Natural killer cell (primary cell): ENCODE measurements at regions of chrX and their contacts with region 1.

Region 1: DNA sequence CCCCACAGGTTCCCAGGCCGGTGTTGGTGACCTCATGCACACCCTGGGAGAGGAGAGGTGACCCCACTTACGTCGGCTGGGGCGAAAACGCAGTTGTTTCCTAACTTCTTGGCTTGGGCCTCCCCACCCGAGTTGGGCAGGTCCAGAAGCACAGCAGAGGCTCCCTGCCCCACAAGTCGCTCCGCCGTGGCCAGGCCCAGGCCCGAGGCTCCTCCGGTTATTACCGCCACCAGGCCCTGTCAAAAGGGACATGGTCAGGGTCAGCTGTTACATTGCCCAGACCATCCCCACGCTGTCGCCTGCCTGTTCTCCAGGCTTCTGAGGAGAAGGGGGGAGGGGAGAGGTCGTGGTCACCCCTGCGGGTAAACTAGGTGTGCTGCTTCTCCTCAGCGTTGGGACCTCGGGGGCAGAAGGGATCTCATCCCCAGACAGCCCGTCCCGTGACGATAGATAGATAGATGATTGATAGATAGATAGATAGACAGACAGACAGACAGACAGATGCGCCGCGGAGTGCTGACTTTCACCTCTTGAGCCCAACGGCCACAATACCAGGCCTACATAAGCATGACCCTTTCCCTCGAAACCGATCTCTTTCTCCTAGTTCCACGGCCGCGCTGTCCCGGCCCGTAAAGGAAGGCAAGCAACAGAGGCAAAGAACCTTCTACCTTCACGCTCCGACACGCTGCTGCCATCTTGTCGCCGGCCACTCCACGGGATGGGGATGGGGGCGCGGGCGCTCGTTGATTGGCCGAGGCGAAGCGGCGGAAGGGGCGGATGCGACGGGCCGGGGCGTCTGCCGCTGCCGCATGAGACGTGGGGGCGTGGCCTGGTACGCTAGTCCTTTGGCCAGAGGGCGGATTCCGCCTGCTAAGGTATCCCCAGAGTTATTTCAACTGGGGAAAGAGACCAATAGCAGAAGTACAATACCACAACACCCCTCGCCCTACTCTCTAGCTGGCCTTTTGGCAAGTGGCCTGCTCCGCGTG is at the start of gene HSD17B10:
- DNase-seq: peak; percentile 79 to 90
- ATAC-seq: peak; percentile 97 to 98 (median 98)
- H3K4me3 ChIP-seq: peak within 1 kb of the TSS; percentile 68
- H3K4me3 Mint-ChIP-seq: peak within 1 kb of the TSS; percentile 93
- H3K27ac ChIP-seq: peak within 1 kb of the TSS; percentile 74
- H3K27ac Mint-ChIP-seq: peak within 1 kb of the TSS; percentile 86 to 94
- H3K4me1 ChIP-seq: peaks cover 12% of the 10 kb centered on the region
- H3K4me1 Mint-ChIP-seq: peaks cover 11 to 15% of the 10 kb centered on the region in 2 donors
- H3K27me3 ChIP-seq: no peaks in the 10 kb centered on the region
- H3K27me3 Mint-ChIP-seq: peaks cover 5 to 8% of the 10 kb centered on the region in 2 donors
- CTCF ChIP-seq: no peak
- total RNA-seq, gene HSD17B10: 49.2 to 56.4 (median 54.3) TPM

Region 2: GRCh38 chrX:53171356-53171755 is 262.6 kb before region 1 on chrX:
- intact Hi-C with region 1: no loop called
- DNase-seq: no peak
- ATAC-seq: no peak
- H3K4me3 ChIP-seq: no peak overlapping the region
- H3K4me3 Mint-ChIP-seq: no peak overlapping the region
- H3K27ac ChIP-seq: no peak overlapping the region
- H3K27ac Mint-ChIP-seq: no peak overlapping the region
- H3K4me1 ChIP-seq: no peaks in the 10 kb centered on the region
- H3K4me1 Mint-ChIP-seq: no peaks in the 10 kb centered on the region
- H3K27me3 ChIP-seq: no peaks in the 10 kb centered on the region
- H3K27me3 Mint-ChIP-seq: no peaks in the 10 kb centered on the region
- CTCF ChIP-seq: no peak

Region 3: DNA sequence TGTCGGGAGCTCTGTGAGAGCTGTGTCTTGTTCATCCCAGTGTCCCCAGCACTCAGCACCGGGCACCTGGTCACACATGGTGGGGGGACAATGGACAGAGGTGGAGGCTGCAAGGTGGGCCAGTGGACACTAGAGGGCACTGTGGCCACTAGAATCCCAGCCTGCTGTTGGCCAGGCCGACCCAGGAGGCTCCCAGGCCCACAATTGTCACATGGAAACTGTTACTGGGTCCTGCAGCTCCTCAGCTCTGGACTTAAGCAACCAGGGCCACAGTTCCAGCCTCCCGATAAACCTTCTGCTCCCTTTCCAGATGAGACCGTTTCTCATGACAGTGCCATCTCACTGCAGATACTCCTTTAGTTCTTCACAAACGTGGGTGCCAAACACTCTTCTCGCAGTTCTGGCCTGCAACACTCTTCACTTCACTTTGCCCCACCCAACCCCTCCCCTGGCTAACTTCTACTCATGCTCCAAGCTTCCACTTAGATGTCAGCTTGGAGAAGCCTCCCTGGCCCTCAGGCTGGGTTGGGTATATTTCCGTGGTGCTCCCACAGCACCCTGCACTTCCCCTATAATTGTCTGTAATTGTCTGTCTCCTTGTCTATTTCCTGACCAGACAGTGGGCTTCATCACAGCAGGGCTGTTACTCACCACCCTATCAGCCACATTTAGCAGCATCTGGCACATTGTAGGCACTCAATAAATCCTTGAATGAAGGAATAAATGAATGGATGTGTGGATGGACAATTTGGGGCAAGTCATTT is 149.1 kb before region 1 on chrX:
- intact Hi-C with region 1: no loop called
- DNase-seq: peak; percentile 41 to 72
- ATAC-seq: peak; percentile 60 to 77 (median 77)
- H3K4me3 ChIP-seq: no peak overlapping the region
- H3K4me3 Mint-ChIP-seq: peak overlapping the region; percentile 53
- H3K27ac ChIP-seq: no peak overlapping the region
- H3K27ac Mint-ChIP-seq: peak overlapping the region; percentile 61 to 79
- H3K4me1 ChIP-seq: peaks cover 56% of the 10 kb centered on the region
- H3K4me1 Mint-ChIP-seq: peaks cover 49 to 51% of the 10 kb centered on the region in 2 donors
- H3K27me3 ChIP-seq: no peaks in the 10 kb centered on the region
- H3K27me3 Mint-ChIP-seq: peaks cover 3 to 7% of the 10 kb centered on the region in 2 donors
- CTCF ChIP-seq: peak; percentile 64

Region 4: DNA sequence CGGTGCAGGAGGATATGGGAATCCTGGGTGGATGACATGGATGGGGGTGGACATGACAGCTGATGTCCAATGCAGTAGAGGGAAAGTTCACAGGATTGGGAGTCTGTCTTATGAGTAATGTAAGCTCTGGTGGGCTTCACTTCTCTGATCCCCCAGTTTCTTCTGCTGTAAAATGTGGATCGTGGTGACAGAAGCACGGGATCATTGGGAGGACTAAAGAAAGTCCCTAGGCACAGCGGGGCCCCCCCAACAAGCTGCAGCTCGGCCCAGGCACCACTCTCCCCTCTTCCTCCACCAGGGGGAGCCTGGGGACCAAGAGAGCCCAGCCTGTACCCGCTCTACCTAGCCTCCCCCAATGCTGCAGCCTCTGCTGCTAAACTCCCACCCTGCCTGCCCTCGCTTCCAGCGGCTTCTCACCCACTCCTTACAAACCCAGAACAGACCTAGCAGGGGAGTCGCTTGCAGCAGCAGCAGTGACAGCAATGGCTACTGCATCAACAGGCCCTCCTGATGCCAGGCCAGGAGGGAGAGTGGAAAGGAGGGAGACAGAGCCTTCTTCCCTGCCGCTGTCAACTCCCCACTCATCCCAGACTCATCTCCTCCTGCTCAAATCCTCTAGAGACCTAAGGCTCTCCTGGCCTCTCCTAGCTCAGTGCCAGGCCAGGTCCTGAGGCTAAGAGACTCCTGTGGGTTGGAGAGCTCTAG is 116.4 kb before region 1 on chrX:
- intact Hi-C with region 1: loop called (anchors 2 kb)
- DNase-seq: peak; percentile 63 to 80
- ATAC-seq: peak; percentile 82 to 87 (median 84)
- H3K4me3 ChIP-seq: no peak overlapping the region
- H3K4me3 Mint-ChIP-seq: no peak overlapping the region
- H3K27ac ChIP-seq: no peak overlapping the region
- H3K27ac Mint-ChIP-seq: no peak overlapping the region
- H3K4me1 ChIP-seq: peaks cover 21% of the 10 kb centered on the region
- H3K4me1 Mint-ChIP-seq: peaks cover 14 to 24% of the 10 kb centered on the region in 2 donors
- H3K27me3 ChIP-seq: peaks cover 15% of the 10 kb centered on the region
- H3K27me3 Mint-ChIP-seq: peaks cover 23 to 37% of the 10 kb centered on the region in 2 donors
- CTCF ChIP-seq: peak; percentile 71

Region 5: GRCh38 chrX:53340852-53341607 is 92.9 kb before region 1 on chrX:
- intact Hi-C with region 1: no loop called
- DNase-seq: no peak
- ATAC-seq: no peak
- H3K4me3 ChIP-seq: no peak overlapping the region
- H3K4me3 Mint-ChIP-seq: no peak overlapping the region
- H3K27ac ChIP-seq: no peak overlapping the region
- H3K27ac Mint-ChIP-seq: no peak overlapping the region
- H3K4me1 ChIP-seq: no peaks in the 10 kb centered on the region
- H3K4me1 Mint-ChIP-seq: no peaks in the 10 kb centered on the region
- H3K27me3 ChIP-seq: no peaks in the 10 kb centered on the region
- H3K27me3 Mint-ChIP-seq: no peaks in the 10 kb centered on the region
- CTCF ChIP-seq: no peak

Region 6: GRCh38 chrX:53422086-53422860 is 11.7 kb before region 1 on chrX and contains the start of gene SMC1A:
- intact Hi-C with region 1: loop called (anchors 1 kb)
- DNase-seq: peak; percentile 89 to 97
- ATAC-seq: peak; percentile 86 to 96 (median 86)
- H3K4me3 ChIP-seq: peak within 1 kb of the TSS; percentile 98
- H3K4me3 Mint-ChIP-seq: peak within 1 kb of the TSS; percentile 98
- H3K27ac ChIP-seq: peak within 1 kb of the TSS; percentile 99
- H3K27ac Mint-ChIP-seq: peak within 1 kb of the TSS; percentile 97 to 99
- H3K4me1 ChIP-seq: peaks cover 19% of the 10 kb centered on the region
- H3K4me1 Mint-ChIP-seq: peaks cover 25 to 28% of the 10 kb centered on the region in 2 donors
- H3K27me3 ChIP-seq: no peaks in the 10 kb centered on the region
- H3K27me3 Mint-ChIP-seq: no peaks in the 10 kb centered on the region
- CTCF ChIP-seq: no peak
- total RNA-seq, gene SMC1A: 54.2 to 96.3 (median 60.4) TPM